ENCODE measurements at regions of chr13 and their contacts with region 1.

Region 1: GRCh38 chr13:98507248-98507797 is 69.6 kb downstream of the STK24 start:
- DNase-seq: no peak
- ATAC-seq: no peak
- H3K4me3 Mint-ChIP-seq: no peak overlapping the region
- H3K27ac Mint-ChIP-seq: no peak overlapping the region
- H3K4me1 Mint-ChIP-seq: peaks cover 73% of the 10 kb centered on the region
- H3K27me3 Mint-ChIP-seq: no peaks in the 10 kb centered on the region

Region 2: DNA sequence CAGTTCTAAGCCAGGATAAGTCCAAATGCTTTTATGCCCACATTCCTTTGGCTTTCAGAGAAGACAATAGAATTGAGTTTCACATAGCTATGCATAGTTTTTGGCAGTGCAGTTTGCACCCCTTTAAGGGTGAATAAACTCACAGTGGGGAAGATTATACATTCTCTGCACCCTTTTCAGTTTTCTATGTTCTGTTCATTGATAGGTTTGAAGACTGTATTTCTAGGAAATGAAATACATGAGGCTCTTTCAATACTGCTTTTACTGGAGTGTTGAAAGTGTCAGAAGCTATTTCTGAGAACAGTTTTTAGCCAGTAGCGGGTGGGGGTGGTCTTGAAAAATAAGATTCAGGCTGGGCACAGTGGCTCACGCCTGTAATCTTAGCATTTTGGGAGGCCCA is 507.7 kb before region 1 on chr13:
- CTCF ChIA-PET with region 1: no interaction called
- DNase-seq: no peak
- ATAC-seq: no peak
- H3K4me3 Mint-ChIP-seq: no peak overlapping the region
- H3K27ac Mint-ChIP-seq: no peak overlapping the region
- H3K4me1 Mint-ChIP-seq: peaks cover 6% of the 10 kb centered on the region
- H3K27me3 Mint-ChIP-seq: no peaks in the 10 kb centered on the region

Region 3: DNA sequence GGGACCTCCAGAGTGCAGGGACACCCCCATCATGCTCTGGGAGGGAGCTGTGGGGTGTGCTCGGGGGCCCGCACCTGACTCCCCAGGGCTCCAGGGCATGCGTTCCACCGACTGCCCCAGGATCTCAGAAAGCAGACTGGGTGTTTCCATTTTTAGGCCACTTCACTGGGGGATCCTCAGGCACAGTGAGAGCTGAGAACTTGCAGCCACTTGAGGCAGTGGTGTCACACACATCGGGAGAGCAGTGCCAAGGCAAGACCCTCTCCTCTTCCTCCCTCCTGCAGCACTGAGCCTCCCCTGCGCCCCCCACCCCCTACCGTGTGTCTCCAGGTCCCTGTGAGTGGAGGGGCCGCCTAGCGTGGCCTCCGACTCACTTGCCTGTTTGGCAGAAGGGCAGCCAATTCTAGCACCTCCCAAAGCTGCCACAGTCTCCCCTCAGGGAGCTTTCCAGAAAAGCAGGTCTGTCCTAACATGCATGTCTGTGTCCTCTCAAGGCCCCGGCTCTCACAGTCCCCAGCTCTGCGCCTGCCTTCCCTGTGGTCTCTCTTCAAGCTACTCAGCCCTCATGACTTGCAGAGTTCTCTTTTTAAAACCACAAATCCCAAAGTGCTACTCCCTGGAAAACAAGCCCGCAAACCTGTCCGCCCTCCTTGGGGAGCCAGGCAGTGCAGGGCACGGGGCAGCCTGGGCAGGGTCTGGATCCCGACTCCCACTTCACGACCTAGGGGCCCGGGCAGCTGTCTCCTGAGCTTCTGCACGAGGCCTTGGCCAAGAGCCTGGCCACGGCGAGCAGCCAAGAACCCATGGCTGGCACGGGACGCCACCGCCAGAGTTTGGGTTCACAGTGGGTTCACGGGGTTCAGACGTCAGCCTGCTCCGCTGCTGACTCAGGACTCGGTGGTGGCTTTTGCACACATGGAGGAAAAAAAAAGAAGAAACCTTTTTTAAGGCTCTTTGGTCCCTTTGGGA is 24.6 kb before region 1 on chr13:
- CTCF ChIA-PET with region 1: interaction called, 17 read pairs
- DNase-seq: no peak
- ATAC-seq: no peak
- H3K4me3 Mint-ChIP-seq: no peak overlapping the region
- H3K27ac Mint-ChIP-seq: no peak overlapping the region
- H3K4me1 Mint-ChIP-seq: peaks cover 85% of the 10 kb centered on the region
- H3K27me3 Mint-ChIP-seq: no peaks in the 10 kb centered on the region